Common myeloid progenitor, CD34-positive (primary cell): ENCODE measurements at regions of chr5 and their contacts with region 1.

Region 1: GRCh38 chr5:14339468-14339867 is 196.3 kb downstream of the TRIO start:
- DNase-seq: no peak
- H3K4me3 ChIP-seq: no peak overlapping the region
- H3K27ac ChIP-seq: no peak overlapping the region
- H3K4me1 ChIP-seq: peaks cover 4 to 17% (median 7%) of the 10 kb centered on the region in 4 experiments
- H3K27me3 ChIP-seq: no peaks in the 10 kb centered on the region

Region 2: GRCh38 chr5:14351845-14352712 is 12.6 kb after region 1 on chr5:
- CTCF ChIA-PET with region 1: interaction called, 14 read pairs
- POLR2A ChIA-PET with region 1: no interaction called
- DNase-seq: peak; percentile 52 to 72 (median 67)
- H3K4me3 ChIP-seq: no peak overlapping the region
- H3K27ac ChIP-seq: no peak overlapping the region
- H3K4me1 ChIP-seq: peaks cover 0 to 18% (median 12%) of the 10 kb centered on the region in 4 experiments
- H3K27me3 ChIP-seq: no peaks in the 10 kb centered on the region